Cardiac septum (tissue), 1 donor: ENCODE measurements at regions of chr2 and their contacts with region 1.

Region 1: DNA sequence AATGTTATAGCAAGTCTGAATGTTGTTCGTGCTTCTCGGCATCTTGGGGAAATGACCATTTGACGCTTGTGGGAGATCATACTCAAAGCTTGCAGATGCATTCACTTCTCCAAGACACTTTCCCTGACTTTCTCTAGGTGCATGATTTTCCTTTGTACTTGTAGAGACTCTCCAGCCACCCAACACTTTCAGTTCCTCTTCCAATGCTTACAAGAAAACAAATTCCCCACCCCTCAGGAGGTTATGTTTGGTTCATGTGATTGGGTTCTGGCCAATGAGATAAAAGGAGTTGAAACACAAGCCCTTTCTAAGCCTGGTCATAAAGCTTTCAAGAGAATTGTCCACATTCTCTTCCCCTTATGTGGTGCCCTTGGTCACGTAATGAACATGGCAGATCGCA is 156.3 kb downstream of the EPHA4 start:
- DNase-seq: no peak

Region 2: DNA sequence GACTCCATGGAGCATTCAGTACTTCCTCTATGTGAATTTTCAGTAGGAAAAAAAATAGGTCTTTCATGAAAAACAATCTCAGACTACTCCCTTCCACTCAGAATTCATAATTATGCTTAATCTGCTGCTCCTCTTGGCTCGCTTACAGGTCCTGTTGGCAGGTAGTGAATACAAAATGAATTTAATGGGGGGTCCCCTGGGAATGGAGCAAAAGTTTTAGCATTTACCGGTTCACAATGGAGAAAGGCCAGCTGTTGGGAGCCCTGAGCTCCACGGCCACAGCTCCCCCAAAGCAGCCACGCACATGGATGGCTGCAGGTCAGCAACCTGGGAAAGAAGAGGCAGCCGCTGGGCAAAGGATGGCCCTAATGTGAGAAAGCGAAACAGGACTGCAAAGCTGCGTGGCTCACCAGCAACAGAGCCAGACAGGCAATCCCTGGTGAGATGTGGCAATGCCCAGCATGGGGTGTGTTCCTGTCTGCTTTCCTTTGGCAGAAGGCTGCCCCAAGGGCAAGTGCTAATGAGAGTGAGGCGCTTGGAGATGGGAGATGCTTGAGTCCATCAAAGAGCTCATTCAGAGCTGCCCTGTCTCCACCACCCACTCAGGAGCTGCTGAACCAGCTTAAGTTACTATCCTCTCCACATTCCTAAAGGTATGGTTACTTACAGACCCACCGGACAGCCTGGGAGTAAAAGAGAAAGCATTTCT is 291.1 kb before region 1 on chr2:
- intact Hi-C with region 1: loop called (anchors 10 kb)
- DNase-seq: no peak

Region 3: DNA sequence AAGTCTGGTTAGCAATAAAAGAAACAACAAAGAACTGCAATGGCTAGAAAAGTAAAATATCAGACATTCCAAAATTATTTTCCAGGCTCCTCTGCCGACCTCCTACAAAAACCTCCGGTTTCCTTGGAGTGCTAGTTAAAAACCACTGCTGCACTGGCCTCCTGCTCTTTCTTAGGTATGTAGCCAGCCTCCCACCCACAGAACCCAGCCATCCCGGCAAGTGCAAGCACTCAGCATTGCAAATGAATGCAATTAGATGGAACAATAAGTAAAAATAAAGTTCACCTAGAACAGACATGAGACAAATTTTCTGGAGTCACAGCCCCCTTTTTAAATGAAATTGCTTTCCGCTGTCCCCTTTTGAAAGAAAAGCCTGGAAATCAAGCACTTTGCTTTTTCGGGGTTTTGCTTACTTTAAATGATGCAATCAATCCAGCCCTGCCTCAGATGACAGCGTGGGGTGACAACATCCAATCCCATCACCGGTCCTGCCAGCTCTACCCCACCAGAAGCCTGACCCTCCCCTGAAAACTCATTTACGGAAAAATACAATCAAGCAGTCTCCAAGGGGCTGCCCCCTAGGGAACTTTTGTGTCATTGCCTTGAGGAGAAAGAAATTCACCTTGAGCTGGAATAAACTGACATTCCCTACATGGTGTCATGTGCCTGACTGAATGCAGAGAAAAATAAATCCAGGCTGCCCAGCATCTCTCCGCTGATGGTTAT is 43.5 kb before region 1 on chr2:
- intact Hi-C with region 1: no loop called
- DNase-seq: no peak